Heart right ventricle (tissue), 16 donors: ENCODE measurements at regions of chr4 and their contacts with region 1.

Region 1: GRCh38 chr4:124579896-124580295 is 132.6 kb downstream of the ANKRD50 start:
- DNase-seq: no peak
- ATAC-seq: no peak
- H3K4me3 ChIP-seq: no peak overlapping the region
- H3K27ac ChIP-seq: no peak overlapping the region
- H3K4me1 ChIP-seq: no peaks in the 10 kb centered on the region
- H3K27me3 ChIP-seq: no peaks in the 10 kb centered on the region
- CTCF ChIP-seq: no peak

Region 2: GRCh38 chr4:123469245-123469644 is 1110.7 kb before region 1 on chr4:
- intact Hi-C with region 1: no loop called
- DNase-seq: no peak
- ATAC-seq: no peak
- H3K4me3 ChIP-seq: no peak overlapping the region
- H3K27ac ChIP-seq: no peak overlapping the region
- H3K4me1 ChIP-seq: no peaks in the 10 kb centered on the region
- H3K27me3 ChIP-seq: no peaks in the 10 kb centered on the region
- CTCF ChIP-seq: no peak

Region 3: GRCh38 chr4:124593494-124593893 is 13.6 kb after region 1 on chr4:
- intact Hi-C with region 1: loop called in 1 of 10 experiments (anchors 1 kb)
- DNase-seq: no peak
- ATAC-seq: no peak
- H3K4me3 ChIP-seq: no peak overlapping the region
- H3K27ac ChIP-seq: no peak overlapping the region
- H3K4me1 ChIP-seq: no peaks in the 10 kb centered on the region
- H3K27me3 ChIP-seq: no peaks in the 10 kb centered on the region
- CTCF ChIP-seq: no peak